ENCODE measurements at regions of chr5 and their contacts with region 1.

Region 1: GRCh38 chr5:106454651-106455415 is 1215.9 kb downstream of the EFNA5 start:
- DNase-seq: no peak
- ATAC-seq: no peak

Region 2: DNA sequence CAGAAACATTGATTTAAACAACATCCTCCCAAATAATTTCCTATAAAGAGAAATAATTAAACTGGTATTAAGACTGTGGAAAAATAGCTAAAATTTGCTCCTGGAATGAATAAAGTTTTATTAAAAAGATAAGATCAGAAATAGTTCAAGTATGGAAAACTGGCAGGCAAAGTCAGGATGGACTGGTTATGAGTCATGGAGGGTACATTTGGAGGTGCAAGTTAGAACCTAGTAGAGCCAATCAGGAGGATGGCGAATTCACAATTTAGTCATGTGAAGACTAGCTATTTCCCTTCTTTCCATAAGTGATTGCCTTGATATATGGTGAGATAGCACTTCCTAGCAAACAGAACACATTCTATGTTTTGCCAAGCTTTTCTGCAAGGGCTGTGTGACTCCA is 87.6 kb before region 1 on chr5:
- intact Hi-C with region 1: no loop called
- DNase-seq: no peak
- ATAC-seq: no peak

Region 3: DNA sequence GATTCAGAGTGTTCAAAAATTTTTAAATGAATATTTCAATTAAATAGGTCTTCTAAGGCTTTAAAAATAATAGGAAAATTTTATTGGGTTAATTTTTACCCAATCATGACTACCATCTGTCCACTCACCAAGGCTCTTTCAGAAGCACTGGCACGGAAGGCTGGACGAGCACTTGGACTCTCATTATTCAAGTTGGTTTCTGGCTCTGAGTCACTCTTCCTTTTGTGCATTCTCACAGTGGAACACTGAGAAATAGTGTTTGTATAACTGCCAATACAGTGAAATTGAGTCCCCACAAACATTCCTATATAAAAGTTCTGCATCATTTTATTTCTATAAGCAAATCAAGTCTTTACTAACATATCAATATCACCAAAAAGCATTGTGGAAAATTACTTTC is 66.9 kb after region 1 on chr5:
- intact Hi-C with region 1: no loop called
- DNase-seq: no peak
- ATAC-seq: no peak

Region 4: GRCh38 chr5:106875591-106876297 is 420.9 kb after region 1 on chr5:
- intact Hi-C with region 1: loop called (anchors 10 kb)
- DNase-seq: no peak
- ATAC-seq: peak; percentile 28

Measured in Right ventricle myocardium inferior (tissue), 1 donor.